GM12878 (cell line): ENCODE measurements at regions of chr6 and their contacts with region 1.

Region 1: GRCh38 chr6:106300944-106301343 is 24.6 kb downstream of the ATG5 start:
- DNase-seq: peak; percentile 12
- ATAC-seq: peak; percentile 61
- H3K4me3 ChIP-seq: no peak overlapping the region
- H3K27ac ChIP-seq: no peak overlapping the region
- H3K4me1 ChIP-seq: no peaks in the 10 kb centered on the region
- H3K27me3 ChIP-seq: no peaks in the 10 kb centered on the region
- CTCF ChIP-seq: peak; percentile 23 to 56 (median 41); a peak in 4 of 6 replicates
- EP300 ChIP-seq: no peak
- POLR2A ChIP-seq: no peak
- RAD21 ChIP-seq: peak; percentile 68

Region 2: DNA sequence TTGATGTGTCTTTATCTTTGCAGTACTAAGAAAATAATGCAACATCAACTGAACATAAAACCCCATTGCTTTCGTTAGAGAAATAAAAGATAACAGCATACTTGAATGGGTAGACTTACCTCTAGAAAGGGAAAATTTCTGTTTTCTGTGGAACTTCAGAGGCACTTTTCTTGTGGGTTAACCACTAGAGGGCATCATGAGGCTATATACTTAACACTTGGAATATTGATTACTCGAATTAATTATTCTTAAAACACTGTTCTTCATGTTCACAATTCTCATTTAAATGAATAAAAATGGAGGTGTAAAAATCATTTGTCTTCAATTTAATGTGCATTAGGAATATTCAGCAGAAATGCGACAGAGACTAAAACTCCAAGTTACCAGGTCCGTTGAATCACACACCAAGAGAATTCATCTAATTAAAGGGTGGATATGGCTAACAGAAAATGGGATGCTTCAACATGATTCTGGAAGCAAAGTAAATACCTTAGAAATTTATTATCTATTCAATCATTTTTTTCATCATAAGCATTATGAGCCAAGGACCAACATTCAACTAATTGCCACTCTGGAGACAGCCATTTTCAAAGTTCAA is 567.3 kb before region 1 on chr6:
- CTCF ChIA-PET with region 1: interaction called, 5 read pairs
- POLR2A ChIA-PET with region 1: no interaction called
- RAD21 ChIA-PET with region 1: no interaction called
- SMC1A ChIA-PET with region 1: no interaction called
- in situ Hi-C with region 1: loop called (anchors 10 kb)
- intact Hi-C with region 1: loop called (anchors 2 kb)
- DNase-seq: no peak
- ATAC-seq: peak; percentile 41; the same call in 1 of the 3 replicates
- H3K4me3 ChIP-seq: no peak overlapping the region
- H3K27ac ChIP-seq: no peak overlapping the region
- H3K4me1 ChIP-seq: no peaks in the 10 kb centered on the region
- H3K27me3 ChIP-seq: no peaks in the 10 kb centered on the region
- CTCF ChIP-seq: peak; percentile 48 to 52 (median 50); a peak in 5 of 6 replicates
- EP300 ChIP-seq: no peak
- POLR2A ChIP-seq: no peak
- RAD21 ChIP-seq: peak; percentile 56

Region 3: GRCh38 chr6:106097411-106098231 is 203.3 kb before region 1 on chr6:
- CTCF ChIA-PET with region 1: interaction called, 8 read pairs
- POLR2A ChIA-PET with region 1: no interaction called
- RAD21 ChIA-PET with region 1: interaction called, 5 read pairs
- SMC1A ChIA-PET with region 1: interaction called, 23 read pairs
- in situ Hi-C with region 1: loop called (anchors 10 kb)
- intact Hi-C with region 1: no loop called
- DNase-seq: peak; percentile 78
- ATAC-seq: peak; percentile 68
- H3K4me3 ChIP-seq: peak overlapping the region; percentile 72
- H3K27ac ChIP-seq: peak overlapping the region; percentile 80
- H3K4me1 ChIP-seq: peaks cover 34% of the 10 kb centered on the region
- H3K27me3 ChIP-seq: no peaks in the 10 kb centered on the region
- CTCF ChIP-seq: no peak
- EP300 ChIP-seq: peak; percentile 65 to 68
- POLR2A ChIP-seq: no peak
- RAD21 ChIP-seq: no peak

Region 4: GRCh38 chr6:106273087-106273486 is 27.9 kb before region 1 on chr6:
- CTCF ChIA-PET with region 1: interaction called, 11 read pairs
- POLR2A ChIA-PET with region 1: no interaction called
- RAD21 ChIA-PET with region 1: interaction called, 5 read pairs
- SMC1A ChIA-PET with region 1: interaction called, 4 read pairs
- in situ Hi-C with region 1: no loop called
- intact Hi-C with region 1: no loop called
- DNase-seq: peak; percentile 4
- ATAC-seq: peak; percentile 61
- H3K4me3 ChIP-seq: no peak overlapping the region
- H3K27ac ChIP-seq: no peak overlapping the region
- H3K4me1 ChIP-seq: peaks cover 23% of the 10 kb centered on the region
- H3K27me3 ChIP-seq: no peaks in the 10 kb centered on the region
- CTCF ChIP-seq: 0 out of 6 replicates have a peak, but pooled peaks of 2 of the 3 experiments have one; percentile 6 to 20
- EP300 ChIP-seq: no peak
- POLR2A ChIP-seq: no peak
- RAD21 ChIP-seq: peak; percentile 28; the same call in 1 of the 2 replicates

Region 5: GRCh38 chr6:106637717-106638341 is 336.9 kb after region 1 on chr6:
- CTCF ChIA-PET with region 1: no interaction called
- POLR2A ChIA-PET with region 1: no interaction called
- RAD21 ChIA-PET with region 1: no interaction called
- SMC1A ChIA-PET with region 1: no interaction called
- in situ Hi-C with region 1: no loop called
- intact Hi-C with region 1: no loop called
- DNase-seq: no peak
- ATAC-seq: peak; percentile 87
- H3K4me3 ChIP-seq: peak overlapping the region; percentile 54
- H3K27ac ChIP-seq: peak overlapping the region; percentile 87
- H3K4me1 ChIP-seq: peaks cover 49% of the 10 kb centered on the region
- H3K27me3 ChIP-seq: no peaks in the 10 kb centered on the region
- CTCF ChIP-seq: no peak
- EP300 ChIP-seq: peak; percentile 33 to 73; a peak in 2 of 4 replicates
- POLR2A ChIP-seq: no peak
- RAD21 ChIP-seq: no peak